H1 (cell line): ENCODE measurements at regions of chr17 and their contacts with region 1.

Region 1: DNA sequence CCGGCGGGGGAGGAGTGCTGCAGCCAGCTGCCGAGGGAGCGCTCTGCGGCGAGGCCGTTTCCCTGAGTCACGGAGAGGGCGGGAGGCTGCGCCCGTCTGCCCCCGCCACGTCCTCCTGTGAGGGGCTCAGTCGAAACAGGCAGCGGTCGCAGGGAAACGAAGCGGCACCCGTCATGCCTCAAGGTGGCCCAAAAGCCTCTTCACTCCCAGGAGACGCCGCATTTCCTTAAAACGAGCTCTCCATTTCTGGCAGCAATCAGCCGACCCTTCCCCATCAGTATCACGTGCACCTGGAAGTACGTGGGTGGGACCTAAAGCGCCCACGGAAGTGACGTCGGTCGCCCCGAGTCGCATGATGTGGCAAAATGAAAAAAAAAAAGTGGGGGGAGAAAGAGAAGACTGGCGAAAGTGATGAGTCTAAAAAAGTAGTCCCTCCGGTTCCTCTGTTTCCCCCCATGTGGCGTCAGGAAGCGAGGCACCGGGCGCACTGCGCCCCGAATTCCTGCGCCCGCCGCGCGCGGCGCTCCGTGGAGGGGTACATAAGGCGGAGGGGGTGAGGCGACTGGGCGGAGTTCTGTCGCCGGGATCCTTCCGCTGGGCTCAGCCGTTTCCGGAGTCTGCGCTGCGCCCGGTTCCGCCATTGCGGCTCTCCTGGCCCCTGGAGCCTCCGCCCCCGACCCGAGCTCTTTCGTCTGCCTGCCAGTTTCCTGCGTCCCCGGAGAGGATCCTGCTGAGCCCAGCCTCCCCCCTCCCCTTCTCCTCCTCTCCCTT is at the start of gene CLTC:
- DNase-seq: peak; percentile 76 to 94
- H3K4me3 ChIP-seq: peak within 1 kb of the TSS; percentile 51 to 94 (median 80)
- H3K27ac ChIP-seq: peak within 1 kb of the TSS; percentile 98
- H3K4me1 ChIP-seq: peaks cover 0 to 2% (median 0%) of the 10 kb centered on the region in 4 experiments; a peak in 1 of 7 replicates
- H3K27me3 ChIP-seq: no peaks in the 10 kb centered on the region
- CTCF ChIP-seq: no peak
- EP300 ChIP-seq: peak; percentile 68 to 93
- POLR2A ChIP-seq: peak; percentile 93 to 100
- RAD21 ChIP-seq: no peak
- total RNA-seq, gene CLTC: 279 and 283 TPM in 2 replicates

Region 2: GRCh38 chr17:59490216-59490615 is 129.3 kb before region 1 on chr17:
- CTCF ChIA-PET with region 1: no interaction called
- POLR2A ChIA-PET with region 1: no interaction called
- DNase-seq: no peak
- H3K4me3 ChIP-seq: no peak overlapping the region
- H3K27ac ChIP-seq: no peak overlapping the region
- H3K4me1 ChIP-seq: no peaks in the 10 kb centered on the region
- H3K27me3 ChIP-seq: no peaks in the 10 kb centered on the region
- CTCF ChIP-seq: no peak
- EP300 ChIP-seq: no peak
- POLR2A ChIP-seq: no peak
- RAD21 ChIP-seq: no peak

Region 3: DNA sequence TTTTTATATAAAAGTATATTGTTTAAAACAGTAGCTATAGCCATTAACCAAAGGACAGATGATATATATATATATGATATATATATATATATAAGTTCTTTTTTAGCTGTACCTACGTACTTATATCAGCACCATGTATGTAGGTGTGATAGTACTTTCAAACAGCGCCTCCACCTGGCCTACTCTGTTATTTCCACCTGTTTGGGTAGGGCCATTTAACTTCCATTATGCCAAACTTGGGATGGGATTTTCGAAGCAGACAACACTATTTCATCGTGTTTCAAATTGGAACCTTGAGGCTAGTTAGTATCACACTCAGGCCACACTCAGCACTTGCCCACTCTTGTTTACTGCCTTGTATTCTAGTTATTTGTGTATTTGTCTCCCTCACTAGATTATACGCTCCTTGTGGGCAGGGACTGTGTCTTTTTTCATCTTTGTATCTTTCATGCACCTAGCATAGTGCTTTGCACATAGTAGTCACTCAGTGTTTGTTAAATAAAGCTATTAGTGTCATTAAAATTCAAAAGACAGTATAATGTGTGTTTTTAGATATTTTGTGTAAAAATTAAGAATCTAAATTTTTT is 11.6 kb before region 1 on chr17:
- CTCF ChIA-PET with region 1: interaction called, 15 read pairs
- POLR2A ChIA-PET with region 1: interaction called, 25 read pairs
- DNase-seq: peak in 1 of 2 experiments; percentile 75
- H3K4me3 ChIP-seq: no peak overlapping the region
- H3K27ac ChIP-seq: no peak overlapping the region
- H3K4me1 ChIP-seq: no peaks in the 10 kb centered on the region
- H3K27me3 ChIP-seq: no peaks in the 10 kb centered on the region
- CTCF ChIP-seq: peak in 2 of 3 experiments; percentile 51 to 70; a peak in 3 of 4 replicates
- EP300 ChIP-seq: no peak
- POLR2A ChIP-seq: no peak
- RAD21 ChIP-seq: peak; percentile 32 to 46

Region 4: GRCh38 chr17:59634632-59635541 is 15.4 kb after region 1 on chr17:
- CTCF ChIA-PET with region 1: no interaction called
- POLR2A ChIA-PET with region 1: interaction called, 17 read pairs
- DNase-seq: no peak
- H3K4me3 ChIP-seq: no peak overlapping the region
- H3K27ac ChIP-seq: no peak overlapping the region
- H3K4me1 ChIP-seq: peaks cover 0 to 6% (median 4%) of the 10 kb centered on the region in 4 experiments; a peak in 5 of 7 replicates
- H3K27me3 ChIP-seq: no peaks in the 10 kb centered on the region
- CTCF ChIP-seq: no peak
- EP300 ChIP-seq: no peak
- POLR2A ChIP-seq: no peak
- RAD21 ChIP-seq: no peak

Region 5: DNA sequence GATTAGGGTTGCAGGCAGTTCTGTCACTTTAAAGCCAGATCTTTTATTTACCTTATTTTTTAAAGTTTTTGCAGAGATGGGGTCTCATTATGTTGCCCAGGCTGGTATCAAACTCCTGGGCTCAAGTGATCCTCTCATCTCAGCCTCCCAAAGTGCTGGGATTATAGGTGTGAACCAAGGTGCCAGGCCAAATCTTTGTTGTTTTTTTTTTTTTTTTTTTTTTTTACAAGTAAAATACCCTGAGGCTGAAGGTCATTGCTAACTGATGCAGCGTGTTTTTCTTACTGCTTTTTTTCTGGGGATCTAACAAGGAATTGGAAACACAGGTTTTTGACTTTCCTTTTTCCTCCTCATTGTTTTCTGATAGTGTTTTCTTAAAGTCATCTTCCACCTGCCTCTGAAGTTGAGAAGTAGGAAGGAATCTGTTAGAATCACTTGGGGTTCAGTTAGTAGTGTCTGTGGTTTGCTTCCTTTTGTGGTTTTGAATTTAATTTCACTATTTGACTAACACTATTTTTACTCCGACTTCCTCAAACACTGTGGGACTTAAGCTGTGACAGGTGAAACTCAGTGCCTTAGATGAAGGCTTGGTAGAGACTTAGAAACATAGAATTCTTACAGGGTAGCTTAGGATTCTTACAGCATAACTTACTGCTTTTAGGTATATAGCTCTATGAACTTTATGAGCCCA is 22.5 kb after region 1 on chr17:
- CTCF ChIA-PET with region 1: no interaction called
- POLR2A ChIA-PET with region 1: interaction called, 14 read pairs
- DNase-seq: no peak
- H3K4me3 ChIP-seq: no peak overlapping the region
- H3K27ac ChIP-seq: no peak overlapping the region
- H3K4me1 ChIP-seq: no peaks in the 10 kb centered on the region
- H3K27me3 ChIP-seq: no peaks in the 10 kb centered on the region
- CTCF ChIP-seq: no peak
- EP300 ChIP-seq: no peak
- POLR2A ChIP-seq: no peak
- RAD21 ChIP-seq: no peak

Region 6: GRCh38 chr17:59707114-59707970 is 87.9 kb after region 1 on chr17 and contains the starts of genes PTRH2 and VMP1:
- CTCF ChIA-PET with region 1: no interaction called
- POLR2A ChIA-PET with region 1: interaction called, 20 read pairs
- DNase-seq: peak; percentile 92 to 98
- H3K4me3 ChIP-seq: peak within 1 kb of the TSS; percentile 94 to 99 (median 98)
- H3K27ac ChIP-seq: peak within 1 kb of the TSS; percentile 81
- H3K4me1 ChIP-seq: no peaks in the 10 kb centered on the region; a peak in 1 of 7 replicates
- H3K27me3 ChIP-seq: no peaks in the 10 kb centered on the region
- CTCF ChIP-seq: no peak
- EP300 ChIP-seq: no peak
- POLR2A ChIP-seq: peak; percentile 95 to 98
- RAD21 ChIP-seq: no peak
- total RNA-seq, gene PTRH2: 36.5 and 39.4 TPM in 2 replicates
- total RNA-seq, gene VMP1: 92.6 and 92.7 TPM in 2 replicates